Endothelial cell of umbilical vein (primary cell): ENCODE measurements at regions of chr4 and their contacts with region 1.

Region 1: DNA sequence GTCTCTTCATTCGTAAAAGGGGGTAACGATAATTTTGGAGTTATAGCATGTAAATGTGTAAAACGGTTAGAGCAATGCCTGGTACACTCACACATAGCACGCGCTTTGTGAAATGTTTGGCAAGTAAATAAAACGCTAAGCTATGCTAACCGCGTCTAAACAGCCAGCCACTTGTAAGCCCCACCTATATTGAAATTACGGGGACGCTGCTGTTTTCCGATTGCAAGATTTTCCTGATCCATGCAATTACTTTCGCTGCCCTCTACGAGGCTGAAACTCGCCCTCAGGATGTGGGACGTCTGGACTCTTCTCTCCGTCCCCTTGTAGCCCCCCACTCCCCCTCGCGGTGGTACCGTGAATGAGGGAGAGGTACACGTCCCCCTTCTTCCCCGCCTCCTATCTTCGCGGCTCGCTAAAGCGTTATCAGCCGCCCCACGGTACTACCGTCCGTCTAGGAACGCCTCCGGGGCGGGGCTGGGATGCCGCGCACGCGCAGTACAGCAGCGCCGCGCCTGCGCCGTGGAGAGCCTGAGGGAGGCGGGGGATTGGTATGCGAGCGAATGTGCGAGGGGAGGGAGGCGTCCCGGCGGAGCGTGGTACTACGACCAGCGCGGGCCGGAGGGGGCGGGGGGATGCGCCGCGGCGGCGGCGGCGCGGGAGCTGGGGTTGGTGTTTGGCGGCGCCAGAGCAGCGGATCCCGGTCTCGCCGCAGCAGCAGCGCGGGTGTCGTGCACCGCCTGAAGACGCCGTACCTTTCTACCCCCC is at the start of gene STIM2:
- DNase-seq: peak; percentile 99
- H3K4me3 ChIP-seq: peak within 1 kb of the TSS; percentile 47 to 98 (median 98)
- H3K27ac ChIP-seq: peak within 1 kb of the TSS; percentile 46
- H3K4me1 ChIP-seq: peaks cover 36% of the 10 kb centered on the region
- H3K27me3 ChIP-seq: peaks cover 0 to 7% of the 10 kb centered on the region in 2 experiments
- CTCF ChIP-seq: peak in 1 of 2 donors; percentile 45
- POLR2A ChIP-seq: no peak
- total RNA-seq, gene STIM2: 21.2 and 23.6 TPM in 2 replicates

Region 2: DNA sequence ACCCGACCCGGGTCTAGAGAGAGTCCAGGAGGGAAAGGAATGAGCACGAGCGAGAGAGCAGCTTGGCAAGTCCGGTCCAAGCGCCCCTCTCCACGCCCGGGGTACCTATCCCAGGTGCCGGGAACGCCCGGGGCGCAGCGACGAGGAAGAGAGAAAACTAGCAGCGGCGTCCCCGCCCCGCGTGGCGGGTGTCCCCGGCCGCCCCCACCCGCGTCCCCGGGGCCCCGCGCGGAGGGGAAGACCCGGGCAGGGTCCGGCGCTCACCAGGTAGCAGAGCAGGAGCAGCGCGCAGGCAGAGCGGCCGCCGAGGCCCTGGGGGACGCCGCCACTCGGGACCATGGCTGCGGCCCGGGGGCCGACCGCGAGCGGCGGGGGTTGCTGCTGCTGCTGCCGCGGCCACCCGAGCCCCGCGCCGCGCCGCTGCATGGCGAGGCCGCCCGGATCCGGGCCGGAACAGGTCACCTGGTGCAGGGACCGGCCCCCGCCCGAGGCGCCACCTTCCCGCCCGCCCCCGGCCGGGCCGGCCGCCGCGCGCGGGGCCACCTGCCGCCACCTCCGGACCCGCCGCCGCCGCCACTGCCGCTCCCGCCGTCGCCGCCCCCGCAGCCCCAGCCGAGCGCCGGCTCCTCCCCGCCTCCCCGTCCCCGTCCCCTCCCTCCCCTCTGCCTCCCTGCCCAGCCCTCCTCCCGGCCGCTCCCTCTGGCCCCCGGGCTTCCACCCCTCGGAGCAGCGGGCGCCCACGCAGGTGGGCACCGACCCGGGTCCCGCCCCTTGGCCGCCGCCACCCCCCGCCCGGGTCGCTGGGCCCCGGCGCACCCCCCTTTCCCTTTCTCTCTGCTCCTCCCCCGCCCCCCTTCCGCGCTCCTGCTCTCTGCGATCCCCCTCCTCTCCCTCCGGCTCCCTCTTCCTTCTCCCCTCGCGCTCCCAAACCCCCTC is 997.7 kb before region 1 on chr4 and contains the start of gene SEL1L3:
- CTCF ChIA-PET with region 1: no interaction called
- POLR2A ChIA-PET with region 1: no interaction called
- dilution Hi-C with region 1: no loop called
- intact Hi-C with region 1: loop called (anchors 5 kb)
- DNase-seq: no peak
- H3K4me3 ChIP-seq: peak within 1 kb of the TSS; percentile 52 to 92 (median 80)
- H3K27ac ChIP-seq: peak within 1 kb of the TSS; percentile 74
- H3K4me1 ChIP-seq: peaks cover 38% of the 10 kb centered on the region
- H3K27me3 ChIP-seq: no peaks in the 10 kb centered on the region
- CTCF ChIP-seq: no peak
- POLR2A ChIP-seq: no peak
- total RNA-seq, gene SEL1L3: 91.1 and 122 TPM in 2 replicates

Region 3: DNA sequence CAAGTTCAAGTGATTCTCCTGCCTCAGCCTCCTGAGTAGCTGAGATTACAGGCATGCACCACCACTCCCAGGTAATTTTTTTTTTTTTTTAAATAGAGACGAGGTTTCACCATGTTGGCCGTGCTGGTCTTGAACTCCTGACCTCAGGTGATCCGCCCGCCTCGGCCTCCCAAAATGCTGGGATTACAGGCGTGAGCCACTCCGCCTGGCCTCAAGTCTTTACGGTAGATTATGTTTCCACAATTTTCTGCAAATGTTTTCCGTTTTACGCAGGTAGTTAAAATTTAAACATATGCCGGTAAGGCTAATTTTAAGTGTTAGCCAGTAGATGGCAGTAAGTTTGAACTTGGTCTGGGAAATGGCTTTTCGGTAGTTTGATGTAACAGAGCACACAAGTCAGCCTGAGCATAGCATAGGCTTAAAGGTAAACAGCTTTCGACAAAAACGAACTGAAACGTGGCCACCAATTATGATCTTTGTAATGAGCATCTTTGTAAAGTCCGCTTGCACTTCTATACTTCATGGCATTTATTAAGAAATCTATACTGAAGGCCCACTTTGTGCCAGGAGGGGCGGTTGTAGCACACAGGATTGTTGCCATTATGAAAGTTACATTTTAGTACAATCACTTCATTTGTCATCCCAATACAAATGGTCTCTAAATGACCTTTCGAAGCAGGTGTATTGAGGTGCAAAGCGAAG is 401.1 kb before region 1 on chr4:
- CTCF ChIA-PET with region 1: interaction called, 10 read pairs
- POLR2A ChIA-PET with region 1: no interaction called
- dilution Hi-C with region 1: no loop called
- intact Hi-C with region 1: loop called (anchors 2 kb)
- DNase-seq: peak; percentile 51
- H3K4me3 ChIP-seq: no peak overlapping the region
- H3K27ac ChIP-seq: no peak overlapping the region
- H3K4me1 ChIP-seq: no peaks in the 10 kb centered on the region
- H3K27me3 ChIP-seq: peaks cover 11% of the 10 kb centered on the region in 2 experiments
- CTCF ChIP-seq: peak; percentile 40 to 42
- POLR2A ChIP-seq: no peak

Region 4: DNA sequence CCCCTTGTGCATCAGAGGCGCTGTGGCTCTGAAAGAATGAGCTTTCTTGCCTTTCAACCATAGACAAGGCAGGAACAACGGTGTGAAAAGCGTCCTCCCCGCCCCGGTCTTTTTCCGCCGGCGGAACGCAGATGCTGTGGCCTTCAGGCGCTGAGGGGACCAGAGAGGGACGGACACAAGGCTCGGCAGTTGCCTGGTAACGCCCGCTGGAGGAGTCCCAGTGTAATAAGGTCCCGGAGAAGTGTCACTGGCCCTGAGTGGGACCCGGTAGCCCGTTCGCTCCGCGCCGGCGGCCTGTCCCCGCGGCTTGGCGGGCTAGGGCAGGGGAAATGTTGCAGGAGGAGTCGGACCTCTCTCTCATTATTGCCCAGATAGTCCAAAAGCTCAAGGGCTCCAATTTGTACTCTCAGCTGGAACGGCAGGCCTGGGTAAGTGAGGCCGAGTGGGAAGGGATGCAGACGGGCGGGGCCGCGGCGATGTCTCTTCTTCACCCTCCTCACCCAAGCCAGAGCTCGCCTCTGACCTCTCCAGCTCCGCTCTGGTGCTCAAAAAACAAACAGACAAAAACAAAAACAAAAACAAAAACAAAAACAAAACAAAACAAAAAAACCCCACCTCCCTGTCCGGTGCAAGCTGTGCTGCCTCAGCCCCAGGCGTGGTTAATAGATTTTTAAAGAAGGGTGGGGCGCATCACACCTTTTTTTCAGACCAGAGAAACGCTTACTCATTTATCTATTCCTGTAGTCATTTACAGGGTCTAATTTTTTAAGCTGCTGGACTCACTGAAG is 276.3 kb before region 1 on chr4 and contains the start of gene TBC1D19:
- CTCF ChIA-PET with region 1: no interaction called
- POLR2A ChIA-PET with region 1: no interaction called
- dilution Hi-C with region 1: no loop called
- intact Hi-C with region 1: loop called (anchors 1 kb)
- DNase-seq: peak; percentile 85
- H3K4me3 ChIP-seq: peak within 1 kb of the TSS; percentile 52 to 90 (median 89)
- H3K27ac ChIP-seq: no peak within 1 kb of the TSS
- H3K4me1 ChIP-seq: peaks cover 10% of the 10 kb centered on the region
- H3K27me3 ChIP-seq: peaks cover 2 to 9% of the 10 kb centered on the region in 2 experiments
- CTCF ChIP-seq: no peak
- POLR2A ChIP-seq: peak; percentile 46
- total RNA-seq, gene TBC1D19: 5.9 and 6.1 TPM in 2 replicates

Region 5: GRCh38 chr4:26812049-26812714 is 48.2 kb before region 1 on chr4:
- CTCF ChIA-PET with region 1: no interaction called
- POLR2A ChIA-PET with region 1: interaction called, 3 read pairs
- dilution Hi-C with region 1: no loop called
- intact Hi-C with region 1: loop called (anchors 1 kb)
- DNase-seq: peak; percentile 36
- H3K4me3 ChIP-seq: no peak overlapping the region
- H3K27ac ChIP-seq: peak overlapping the region; percentile 73
- H3K4me1 ChIP-seq: peaks cover 18% of the 10 kb centered on the region
- H3K27me3 ChIP-seq: no peaks in the 10 kb centered on the region
- CTCF ChIP-seq: no peak
- POLR2A ChIP-seq: peak; percentile 17

Region 6: GRCh38 chr4:26899991-26900390 is 39.7 kb after region 1 on chr4:
- CTCF ChIA-PET with region 1: no interaction called
- POLR2A ChIA-PET with region 1: no interaction called
- dilution Hi-C with region 1: no loop called
- intact Hi-C with region 1: loop called (anchors 2 kb)
- DNase-seq: peak; percentile 68
- H3K4me3 ChIP-seq: no peak overlapping the region
- H3K27ac ChIP-seq: no peak overlapping the region
- H3K4me1 ChIP-seq: peaks cover 21% of the 10 kb centered on the region
- H3K27me3 ChIP-seq: no peaks in the 10 kb centered on the region
- CTCF ChIP-seq: no peak
- POLR2A ChIP-seq: no peak

Region 7: DNA sequence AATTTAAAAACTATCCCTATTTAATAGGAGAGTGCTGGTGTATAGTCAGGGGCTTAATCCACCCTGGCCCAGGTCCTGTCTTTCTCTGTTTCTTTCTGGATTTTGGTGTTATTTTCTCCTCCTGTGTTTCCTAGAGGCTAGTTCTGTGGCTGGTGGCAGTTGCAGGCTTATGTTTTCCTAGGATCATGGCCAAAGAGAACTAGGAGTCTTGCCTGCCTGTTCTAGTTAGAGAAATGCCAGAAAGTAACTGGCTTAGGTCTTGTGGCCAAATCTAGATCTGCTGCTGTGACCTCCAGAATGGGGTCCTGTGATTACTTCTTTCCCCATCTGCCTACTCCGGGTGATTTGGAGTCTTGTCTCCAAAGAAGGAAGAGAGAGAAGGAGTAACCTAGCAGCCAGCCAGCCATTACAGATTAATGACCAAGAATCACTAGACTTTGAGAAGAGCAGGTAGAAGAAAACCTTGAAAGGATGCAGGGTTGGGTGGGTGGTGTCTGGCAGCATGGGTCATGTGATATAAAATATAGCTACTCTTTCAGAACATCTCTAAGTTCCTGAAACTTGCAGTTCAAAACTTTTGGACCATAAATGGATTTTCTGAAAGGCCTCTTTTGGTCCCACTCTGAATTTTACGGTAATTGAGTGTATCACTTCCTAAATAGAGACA is 118.2 kb after region 1 on chr4:
- CTCF ChIA-PET with region 1: no interaction called
- POLR2A ChIA-PET with region 1: no interaction called
- dilution Hi-C with region 1: no loop called
- intact Hi-C with region 1: no loop called
- DNase-seq: no peak
- H3K4me3 ChIP-seq: no peak overlapping the region
- H3K27ac ChIP-seq: no peak overlapping the region
- H3K4me1 ChIP-seq: no peaks in the 10 kb centered on the region
- H3K27me3 ChIP-seq: no peaks in the 10 kb centered on the region
- CTCF ChIP-seq: no peak
- POLR2A ChIP-seq: no peak